Astrocyte of the cerebellum (primary cell): ENCODE measurements at regions of chr2 and their contacts with region 1.

Region 1: DNA sequence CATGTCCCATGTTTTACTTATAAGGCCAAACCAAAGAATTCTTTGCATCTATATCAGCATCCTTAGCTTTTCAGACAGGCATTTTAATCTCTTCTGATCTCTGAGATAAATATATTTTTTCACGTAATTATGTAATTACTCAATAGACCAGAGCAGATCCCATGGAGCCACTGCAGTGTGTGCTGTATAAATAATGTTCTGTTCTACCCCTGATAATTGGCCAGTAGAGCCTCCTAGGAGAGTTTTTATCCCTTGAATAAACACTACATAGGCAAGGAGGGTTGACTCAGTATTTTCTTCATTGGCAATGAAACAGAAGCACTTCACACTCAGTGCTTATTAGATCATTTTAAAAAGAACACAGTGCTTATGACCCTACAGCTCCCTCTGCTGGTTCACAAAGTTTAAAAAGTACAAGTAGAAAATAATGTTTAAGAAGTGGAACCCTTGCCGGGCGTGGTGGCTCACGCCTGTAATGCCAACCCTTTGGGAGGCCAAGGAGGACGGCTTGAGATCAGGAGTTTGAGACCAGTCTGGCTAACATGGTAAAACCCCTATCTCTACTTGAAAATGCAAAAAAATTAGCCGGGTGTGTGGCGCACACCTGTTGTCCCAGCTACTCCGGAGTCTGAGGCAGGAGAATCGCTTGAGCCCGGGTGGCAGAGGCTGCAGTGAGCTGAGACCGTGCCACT is 91.9 kb downstream of the PPP1R1C start:
- DNase-seq: peak; percentile 91
- H3K4me3 ChIP-seq: no peak overlapping the region
- CTCF ChIP-seq: peak; percentile 57

Region 2: GRCh38 chr2:181774685-181775084 is 302.9 kb before region 1 on chr2:
- in situ Hi-C with region 1: loop called (anchors 25 kb)
- DNase-seq: no peak
- H3K4me3 ChIP-seq: no peak overlapping the region
- CTCF ChIP-seq: no peak

Region 3: DNA sequence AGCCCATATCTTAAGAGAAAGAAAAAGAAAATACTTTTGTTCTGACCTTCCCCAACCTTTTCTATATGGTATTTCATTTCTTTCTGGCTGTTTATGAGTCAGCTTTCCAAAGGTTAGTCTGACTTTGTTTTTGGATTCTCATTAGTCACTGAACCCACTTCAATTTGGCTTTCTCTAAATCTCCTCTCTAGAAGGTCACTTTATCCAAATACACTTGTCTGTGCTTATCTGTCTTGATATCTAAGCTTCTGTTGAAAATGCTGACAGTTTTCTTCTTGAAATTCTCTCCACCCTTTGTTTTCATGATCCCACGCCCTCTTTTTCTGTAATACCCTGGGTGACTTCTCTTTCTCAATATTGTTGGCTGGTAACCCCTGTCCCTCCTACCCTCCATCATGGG is 56.9 kb before region 1 on chr2:
- in situ Hi-C with region 1: loop called (anchors 5 kb)
- DNase-seq: no peak
- H3K4me3 ChIP-seq: no peak overlapping the region
- CTCF ChIP-seq: no peak

Region 4: DNA sequence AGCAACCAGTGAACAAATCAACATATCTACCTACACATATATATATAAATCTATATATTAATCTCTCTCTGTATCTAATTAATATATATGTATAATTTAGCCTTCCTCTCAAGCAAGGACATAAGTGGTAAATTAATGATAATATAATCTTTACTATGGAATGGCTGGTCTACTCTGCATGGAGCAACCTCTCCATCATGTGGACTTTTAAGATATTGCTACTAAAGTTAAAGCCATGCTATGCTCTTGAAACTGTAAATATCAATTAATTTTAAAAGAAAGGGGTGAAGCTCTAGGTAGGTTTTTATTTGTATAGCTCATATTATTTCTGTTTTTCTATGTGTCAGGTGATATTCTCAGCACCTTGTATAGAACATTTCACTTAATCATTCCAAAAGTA is 55.0 kb after region 1 on chr2:
- in situ Hi-C with region 1: no loop called
- DNase-seq: no peak
- H3K4me3 ChIP-seq: no peak overlapping the region
- CTCF ChIP-seq: peak; percentile 36